ENCODE measurements at regions of chr17 and their contacts with region 1.

Region 1: GRCh38 chr17:38824899-38825761 is at the start of gene CWC25:
- DNase-seq: peak; percentile 97
- ATAC-seq: peak; percentile 82
- H3K4me3 Mint-ChIP-seq: peak within 1 kb of the TSS; percentile 97
- H3K27ac Mint-ChIP-seq: peak within 1 kb of the TSS; percentile 99
- H3K4me1 Mint-ChIP-seq: peaks cover 14% of the 10 kb centered on the region
- H3K27me3 Mint-ChIP-seq: peaks cover 9% of the 10 kb centered on the region; the same call in 1 of the 2 replicates
- CTCF ChIP-seq: no peak
- total RNA-seq, gene CWC25: 16.1 to 17.3 TPM (median 17.1 TPM) in 3 replicates

Region 2: GRCh38 chr17:38853292-38854219 is 28.4 kb after region 1 on chr17 and contains the start of gene RPL23:
- CTCF ChIA-PET with region 1: no interaction called
- POLR2A ChIA-PET with region 1: interaction called, 10 read pairs
- DNase-seq: peak; percentile 92
- ATAC-seq: peak; percentile 83
- H3K4me3 Mint-ChIP-seq: peak within 1 kb of the TSS; percentile 99
- H3K27ac Mint-ChIP-seq: peak within 1 kb of the TSS; percentile 100
- H3K4me1 Mint-ChIP-seq: peaks cover 32% of the 10 kb centered on the region
- H3K27me3 Mint-ChIP-seq: no peaks in the 10 kb centered on the region; the same call in 1 of the 2 replicates
- CTCF ChIP-seq: no peak
- total RNA-seq, gene RPL23: 1,832 to 2,028 TPM (median 1,945 TPM) in 3 replicates

Region 3: DNA sequence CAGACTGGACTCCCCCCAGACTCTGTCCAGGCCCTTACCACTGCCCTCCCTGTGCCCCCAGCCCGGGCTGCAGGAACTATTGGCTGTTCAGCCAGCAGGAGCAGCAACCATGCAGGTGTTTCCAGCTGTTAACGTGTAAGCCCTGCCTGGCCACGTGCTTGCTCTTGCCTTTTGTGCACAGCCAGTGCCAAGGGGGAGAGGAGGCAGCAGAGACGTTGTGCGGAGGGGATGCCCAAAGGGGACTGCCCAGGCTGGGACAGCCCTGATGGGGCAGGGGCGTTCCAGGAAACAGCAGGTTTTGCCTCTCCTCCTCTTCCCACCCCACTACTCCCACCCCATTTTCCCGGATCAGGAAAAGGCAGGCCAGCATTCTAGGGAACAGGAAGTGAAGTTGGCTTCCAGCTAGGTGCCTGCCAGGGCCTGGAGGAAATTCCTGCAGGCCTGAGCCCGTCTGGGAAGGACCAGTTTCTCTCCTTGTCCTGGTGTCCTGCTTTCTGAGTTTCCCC is 83.6 kb after region 1 on chr17:
- CTCF ChIA-PET with region 1: no interaction called
- POLR2A ChIA-PET with region 1: no interaction called
- DNase-seq: peak; percentile 16
- ATAC-seq: peak; percentile 15; the same call in 1 of the 2 replicates
- H3K4me3 Mint-ChIP-seq: no peak overlapping the region
- H3K27ac Mint-ChIP-seq: peak overlapping the region; percentile 48
- H3K4me1 Mint-ChIP-seq: peaks cover 18% of the 10 kb centered on the region
- H3K27me3 Mint-ChIP-seq: no peaks in the 10 kb centered on the region
- CTCF ChIP-seq: no peak